Stomach (tissue), 19 donors: ENCODE measurements at regions of chr5 and their contacts with region 1.

Region 1: DNA sequence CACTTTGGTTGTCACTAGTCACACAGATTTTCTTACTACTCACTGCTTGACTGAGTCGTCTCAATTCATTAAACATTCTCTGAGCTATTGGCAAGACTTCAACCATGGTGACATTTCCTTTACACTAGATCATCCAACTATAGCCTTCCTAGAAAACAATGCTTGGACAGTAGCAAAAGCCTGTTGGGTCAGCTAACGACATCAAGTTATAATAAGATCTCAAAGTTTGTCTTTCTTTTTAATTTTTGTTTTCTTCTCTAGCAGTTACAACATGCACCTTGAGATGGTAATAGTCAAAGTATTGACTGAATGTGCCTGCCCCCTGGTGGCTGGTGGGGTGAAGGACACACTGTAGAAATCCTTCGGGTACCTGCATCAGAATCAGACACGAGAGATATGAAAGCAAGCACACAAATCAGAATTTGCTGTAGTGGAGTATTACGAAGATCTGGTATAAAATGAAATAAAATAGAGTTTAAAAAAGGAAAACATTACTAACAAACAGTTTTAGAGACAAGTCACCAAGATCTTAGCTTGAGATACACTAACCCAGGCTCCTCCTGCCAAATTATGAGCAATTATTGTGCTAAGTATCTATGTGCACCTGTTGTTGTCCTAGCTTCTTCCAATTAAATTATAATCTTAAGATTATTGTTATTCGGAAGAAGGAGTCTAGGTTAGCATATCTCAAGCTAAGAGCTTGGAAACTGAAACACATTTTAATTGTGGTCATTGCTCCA is 81.2 kb downstream of the ARL15 start:
- DNase-seq: peak; percentile 82
- H3K4me3 ChIP-seq: no peak overlapping the region
- H3K27ac ChIP-seq: no peak overlapping the region
- H3K4me1 ChIP-seq: peaks cover 0 to 11% (median 5%) of the 10 kb centered on the region in 4 donors
- H3K27me3 ChIP-seq: no peaks in the 10 kb centered on the region
- CTCF ChIP-seq: peak in 6 of 7 experiments; percentile 24 to 96 (median 90)
- EP300 ChIP-seq: no peak
- POLR2A ChIP-seq: no peak

Region 2: DNA sequence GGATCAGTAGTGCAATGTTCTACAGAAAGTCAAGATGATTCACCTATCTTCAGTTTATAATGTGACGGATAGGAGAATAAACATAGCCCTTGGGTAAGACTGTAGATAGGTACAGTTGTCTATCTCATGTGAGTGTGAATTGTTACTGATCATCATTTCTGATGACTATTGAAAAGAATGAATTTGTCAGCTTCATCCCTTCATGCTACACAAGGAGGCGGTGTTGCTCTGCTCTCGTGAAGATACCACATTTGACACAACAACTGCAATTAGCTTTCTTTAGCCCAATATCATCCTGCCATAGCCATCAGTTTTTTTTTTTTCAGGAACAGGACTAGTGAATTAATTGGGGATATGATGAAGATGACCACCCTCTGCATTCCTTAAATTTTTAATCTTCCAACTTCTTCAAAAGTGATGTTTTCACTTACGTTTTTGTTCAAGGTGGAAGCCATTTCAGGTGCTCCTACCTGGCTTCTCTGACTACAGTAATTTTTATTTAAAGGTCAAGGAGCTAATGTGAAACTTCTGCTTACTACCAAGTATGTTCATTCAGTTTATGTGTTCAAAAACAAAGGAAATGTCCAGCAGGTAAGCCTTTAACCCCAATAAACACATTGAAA is 966.8 kb before region 1 on chr5:
- intact Hi-C with region 1: loop called (anchors 10 kb)
- DNase-seq: peak; percentile 27 to 33
- H3K4me3 ChIP-seq: no peak overlapping the region
- H3K27ac ChIP-seq: no peak overlapping the region
- H3K4me1 ChIP-seq: no peaks in the 10 kb centered on the region
- H3K27me3 ChIP-seq: no peaks in the 10 kb centered on the region
- CTCF ChIP-seq: peak in 3 of 7 experiments; percentile 16 to 35 (median 35)
- EP300 ChIP-seq: no peak
- POLR2A ChIP-seq: no peak

Region 3: GRCh38 chr5:53469946-53470687 is 759.1 kb before region 1 on chr5:
- intact Hi-C with region 1: loop called (anchors 5 kb)
- DNase-seq: no peak
- H3K4me3 ChIP-seq: no peak overlapping the region
- H3K27ac ChIP-seq: no peak overlapping the region
- H3K4me1 ChIP-seq: no peaks in the 10 kb centered on the region
- H3K27me3 ChIP-seq: no peaks in the 10 kb centered on the region
- CTCF ChIP-seq: no peak
- EP300 ChIP-seq: no peak
- POLR2A ChIP-seq: no peak

Region 4: DNA sequence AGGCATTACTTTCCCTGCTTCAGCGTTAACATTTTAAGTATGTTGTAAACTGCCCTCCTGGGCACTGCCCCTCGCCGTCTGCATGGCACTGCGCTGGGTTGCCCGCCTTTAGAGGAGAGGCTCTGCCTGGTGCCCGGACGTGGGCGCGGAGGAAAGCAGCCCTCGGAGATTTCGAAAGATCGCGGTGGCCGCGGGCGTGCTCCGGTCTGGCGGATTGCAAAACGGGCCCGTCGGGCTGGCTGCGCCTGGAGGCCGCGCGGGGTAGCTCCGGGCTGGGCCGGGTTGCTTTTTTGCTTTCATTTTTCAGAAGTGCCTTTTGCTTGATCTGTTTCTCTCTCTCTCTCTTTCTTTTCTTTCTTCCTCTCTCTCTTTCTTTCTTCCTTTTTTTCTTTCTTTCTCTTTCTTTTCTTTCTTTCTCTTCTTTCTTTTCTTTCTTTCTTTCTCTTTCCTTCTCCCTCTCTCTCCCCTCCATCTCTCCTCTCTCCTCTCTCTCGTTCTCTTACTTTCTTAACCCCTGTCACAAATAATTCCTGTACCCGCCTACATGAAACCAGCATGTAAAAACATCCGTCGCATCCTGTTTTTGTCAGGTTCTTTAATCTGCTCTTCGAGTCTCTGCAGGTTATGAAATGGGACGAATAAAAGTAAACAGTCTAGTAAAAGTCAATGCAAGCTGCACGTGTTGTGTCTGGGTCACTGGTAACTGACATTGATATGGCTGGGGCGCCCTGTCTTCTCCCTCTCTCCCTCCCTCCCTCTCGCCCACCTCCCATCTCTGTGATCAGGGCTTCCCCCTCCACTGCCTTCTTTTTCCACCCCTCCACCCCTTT is 747.1 kb before region 1 on chr5:
- intact Hi-C with region 1: loop called (anchors 5 kb)
- DNase-seq: peak; percentile 78 to 88
- H3K4me3 ChIP-seq: peak overlapping the region; percentile 66 to 91 (median 84)
- H3K27ac ChIP-seq: peak overlapping the region; percentile 42 to 87 (median 71)
- H3K4me1 ChIP-seq: peaks cover 14 to 42% (median 40%) of the 10 kb centered on the region in 4 donors
- H3K27me3 ChIP-seq: peaks cover 0 to 26% (median 0%) of the 10 kb centered on the region in 3 donors
- CTCF ChIP-seq: peak in 5 of 7 experiments; percentile 10 to 46 (median 30)
- EP300 ChIP-seq: no peak
- POLR2A ChIP-seq: no peak